ENCODE measurements at regions of chr6 and their contacts with region 1.

Region 1: DNA sequence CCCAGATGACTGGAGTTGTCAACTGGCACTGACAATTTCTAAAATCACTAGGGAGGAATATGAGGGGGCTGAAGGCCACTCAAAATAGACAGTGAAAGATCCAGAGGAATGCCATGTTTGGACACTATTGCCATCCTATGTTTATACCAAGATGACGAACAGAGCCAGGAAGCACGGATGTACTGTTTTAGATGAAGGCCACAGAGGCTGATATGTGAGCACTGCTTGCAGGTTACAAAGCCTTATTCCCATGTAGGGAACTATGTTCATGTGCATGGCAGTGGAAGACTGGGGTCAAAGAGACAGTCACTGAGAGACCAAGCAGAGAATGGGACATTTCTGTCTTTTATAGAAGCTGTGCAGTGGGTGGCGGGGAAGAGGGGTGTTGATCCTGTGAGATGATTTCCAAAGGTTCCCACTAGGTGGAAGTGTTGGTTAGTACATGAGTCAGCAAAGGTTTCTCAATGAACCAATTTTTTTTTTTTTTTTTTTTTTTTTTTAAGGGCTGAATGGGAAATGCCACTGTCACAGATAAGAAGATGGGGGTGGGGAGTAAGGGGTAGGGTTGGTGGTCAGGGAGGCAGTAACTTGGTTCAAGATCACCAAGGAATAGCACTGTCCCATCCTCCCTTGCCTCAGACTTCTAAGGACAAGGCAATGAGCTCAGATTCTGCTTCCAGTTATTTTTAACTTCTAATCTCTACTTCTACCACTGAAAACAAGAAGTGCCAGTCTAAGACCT is 46.7 kb upstream of the MOCS1 start:
- DNase-seq: peak; percentile 30
- H3K4me3 ChIP-seq: no peak overlapping the region
- H3K27ac ChIP-seq: no peak overlapping the region
- H3K4me1 ChIP-seq: no peaks in the 10 kb centered on the region
- H3K27me3 ChIP-seq: no peaks in the 10 kb centered on the region
- CTCF ChIP-seq: peak in 1 of 2 donors; percentile 24
- POLR2A ChIP-seq: no peak

Region 2: DNA sequence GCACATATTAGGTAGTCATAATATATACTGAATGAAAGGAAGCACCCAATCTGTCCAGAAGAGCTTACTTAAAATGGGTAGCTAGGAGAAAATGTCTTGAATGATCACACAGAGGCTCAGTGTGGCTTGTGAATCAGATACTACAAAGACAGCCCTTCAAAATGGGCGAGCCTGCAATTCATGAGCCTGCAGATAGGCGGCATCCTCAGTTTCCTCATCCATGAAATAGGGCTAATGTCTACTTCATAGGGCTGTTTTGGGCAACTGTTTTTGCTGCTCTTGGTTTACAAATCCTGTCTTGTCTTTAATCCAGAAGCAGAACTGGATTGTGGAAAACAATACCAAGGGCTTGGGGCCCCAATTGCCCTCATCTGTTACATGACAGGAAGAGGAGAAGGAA is 529.2 kb before region 1 on chr6:
- CTCF ChIA-PET with region 1: no interaction called
- POLR2A ChIA-PET with region 1: no interaction called
- dilution Hi-C with region 1: no loop called
- intact Hi-C with region 1: no loop called
- DNase-seq: no peak
- H3K4me3 ChIP-seq: no peak overlapping the region
- H3K27ac ChIP-seq: no peak overlapping the region
- H3K4me1 ChIP-seq: no peaks in the 10 kb centered on the region
- H3K27me3 ChIP-seq: no peaks in the 10 kb centered on the region
- CTCF ChIP-seq: peak in 1 of 2 donors; percentile 3
- POLR2A ChIP-seq: no peak

Region 3: GRCh38 chr6:40308533-40309306 is 327.7 kb after region 1 on chr6:
- CTCF ChIA-PET with region 1: no interaction called
- POLR2A ChIA-PET with region 1: no interaction called
- dilution Hi-C with region 1: no loop called
- intact Hi-C with region 1: loop called (anchors 1 kb)
- DNase-seq: peak; percentile 43
- H3K4me3 ChIP-seq: no peak overlapping the region
- H3K27ac ChIP-seq: no peak overlapping the region
- H3K4me1 ChIP-seq: no peaks in the 10 kb centered on the region
- H3K27me3 ChIP-seq: no peaks in the 10 kb centered on the region
- CTCF ChIP-seq: peak; percentile 74 to 82
- POLR2A ChIP-seq: no peak

Region 4: GRCh38 chr6:41066867-41067304 is 1085.9 kb after region 1 on chr6:
- CTCF ChIA-PET with region 1: no interaction called
- POLR2A ChIA-PET with region 1: no interaction called
- dilution Hi-C with region 1: no loop called
- intact Hi-C with region 1: loop called (anchors 2 kb)
- DNase-seq: peak; percentile 69
- H3K4me3 ChIP-seq: no peak overlapping the region
- H3K27ac ChIP-seq: no peak overlapping the region
- H3K4me1 ChIP-seq: peaks cover 8% of the 10 kb centered on the region
- H3K27me3 ChIP-seq: no peaks in the 10 kb centered on the region
- CTCF ChIP-seq: peak; percentile 62 to 68
- POLR2A ChIP-seq: no peak

Measured in endothelial cell of umbilical vein (primary cell).